SK-N-SH (cell line): ENCODE measurements at regions of chr10 and their contacts with region 1.

Region 1: DNA sequence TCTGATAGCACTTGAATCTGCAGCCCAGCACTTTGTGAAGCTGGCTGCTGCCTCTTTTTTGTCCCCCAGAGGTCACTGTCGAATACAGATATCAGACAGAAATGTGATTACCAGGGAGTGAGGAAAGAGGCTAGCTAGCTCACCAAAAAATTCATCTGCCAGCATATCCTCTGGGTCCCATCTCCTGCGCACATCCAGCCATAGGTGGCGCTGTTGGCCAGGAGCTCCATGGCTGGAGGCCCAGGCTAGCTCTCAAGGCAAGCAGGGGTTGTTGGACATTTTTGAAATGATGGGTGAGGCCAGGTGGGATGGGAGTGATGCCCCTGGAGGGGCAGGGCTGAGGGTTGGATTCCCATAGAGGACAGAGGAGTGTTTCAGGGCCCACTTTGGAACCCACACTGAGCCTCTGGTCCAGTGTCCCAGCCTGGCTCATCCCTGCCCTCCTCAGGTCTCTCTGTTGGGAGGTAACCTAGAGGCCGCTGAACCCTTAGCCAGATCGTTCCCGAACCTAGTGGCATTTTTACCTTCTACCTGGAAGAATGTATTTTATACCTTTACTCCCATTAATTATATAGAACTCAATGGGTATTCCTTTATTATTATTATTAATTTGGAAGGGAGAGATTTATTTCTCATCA is 14.8 kb downstream of the DPCD start:
- DNase-seq: peak; percentile 84
- H3K4me3 ChIP-seq: peak overlapping the region in 1 of 2 experiments; percentile 24; a peak in 1 of 4 replicates
- H3K27ac ChIP-seq: no peak overlapping the region; a peak in 1 of 4 replicates
- H3K4me1 ChIP-seq: no peaks in the 10 kb centered on the region; a peak in 1 of 4 replicates
- H3K27me3 ChIP-seq: no peaks in the 10 kb centered on the region
- CTCF ChIP-seq: peak; percentile 90
- EP300 ChIP-seq: no peak
- RAD21 ChIP-seq: peak; percentile 92

Region 2: DNA sequence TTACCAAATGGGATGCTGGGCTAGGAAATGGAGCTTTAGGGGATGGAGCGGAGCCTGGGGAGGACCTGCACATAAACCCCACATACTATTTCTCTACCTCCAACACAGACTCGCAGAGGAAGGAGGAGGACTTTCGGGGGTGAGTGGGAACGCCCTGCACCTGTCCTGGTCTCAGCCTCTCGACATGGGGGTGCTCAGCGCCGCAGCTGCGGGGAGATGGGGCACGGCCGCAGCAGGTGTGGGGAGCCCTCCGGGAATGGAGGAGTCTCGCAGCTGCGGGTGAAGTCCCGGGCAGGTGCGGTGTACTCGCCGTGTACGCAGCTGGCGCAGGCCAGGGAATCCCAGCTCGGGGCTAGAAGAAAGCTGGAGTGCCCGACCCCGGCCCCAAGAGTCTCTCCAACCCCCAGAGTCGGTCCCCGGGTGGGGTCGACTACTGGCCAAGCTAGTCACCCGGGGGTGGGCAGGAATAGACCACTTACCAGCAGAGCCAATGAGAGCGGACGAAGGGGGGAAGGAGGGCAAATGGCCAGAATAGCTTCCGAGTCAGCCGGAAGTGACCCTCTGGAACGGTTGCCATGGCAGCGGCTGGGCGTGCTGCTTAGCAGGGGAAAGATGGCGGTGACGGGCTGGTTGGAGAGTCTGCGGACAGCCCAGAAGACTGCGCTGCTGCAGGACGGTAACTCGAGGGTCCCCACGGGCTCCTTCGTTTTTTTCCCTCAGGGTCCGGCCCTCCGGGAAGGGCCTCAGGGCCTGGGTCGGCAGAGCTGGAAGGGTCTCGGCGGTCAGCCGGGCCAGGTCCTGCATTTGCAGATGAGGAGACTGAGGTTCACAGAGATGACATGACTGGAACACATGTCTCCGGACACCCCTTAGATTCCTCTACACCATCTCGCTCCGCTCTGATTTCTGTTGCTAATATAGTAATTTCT is 14.9 kb before region 1 on chr10 and contains the starts of genes DPCD and POLL:
- CTCF ChIA-PET with region 1: interaction called, 14 read pairs
- POLR2A ChIA-PET with region 1: interaction called, 3 read pairs
- DNase-seq: peak; percentile 97
- H3K4me3 ChIP-seq: peak within 1 kb of the TSS; percentile 92 to 94
- H3K27ac ChIP-seq: peak within 1 kb of the TSS; percentile 17 to 76; a peak in 2 of 4 replicates
- H3K4me1 ChIP-seq: peaks cover 13 to 26% of the 10 kb centered on the region in 2 experiments; a peak in 2 of 4 replicates
- H3K27me3 ChIP-seq: no peaks in the 10 kb centered on the region
- CTCF ChIP-seq: no peak
- EP300 ChIP-seq: no peak
- RAD21 ChIP-seq: no peak
- polyA plus RNA-seq, gene DPCD: 106 and 121 TPM in 2 replicates
- polyA plus RNA-seq, gene POLL: 22.0 and 27.3 TPM in 2 replicates

Region 3: GRCh38 chr10:101629837-101630632 is 27.2 kb after region 1 on chr10:
- CTCF ChIA-PET with region 1: interaction called, 11 read pairs
- POLR2A ChIA-PET with region 1: no interaction called
- DNase-seq: no peak
- H3K4me3 ChIP-seq: no peak overlapping the region
- H3K27ac ChIP-seq: no peak overlapping the region
- H3K4me1 ChIP-seq: peaks cover 0 to 6% of the 10 kb centered on the region in 2 experiments; a peak in 1 of 4 replicates
- H3K27me3 ChIP-seq: no peaks in the 10 kb centered on the region
- CTCF ChIP-seq: no peak
- EP300 ChIP-seq: no peak
- RAD21 ChIP-seq: no peak

Region 4: DNA sequence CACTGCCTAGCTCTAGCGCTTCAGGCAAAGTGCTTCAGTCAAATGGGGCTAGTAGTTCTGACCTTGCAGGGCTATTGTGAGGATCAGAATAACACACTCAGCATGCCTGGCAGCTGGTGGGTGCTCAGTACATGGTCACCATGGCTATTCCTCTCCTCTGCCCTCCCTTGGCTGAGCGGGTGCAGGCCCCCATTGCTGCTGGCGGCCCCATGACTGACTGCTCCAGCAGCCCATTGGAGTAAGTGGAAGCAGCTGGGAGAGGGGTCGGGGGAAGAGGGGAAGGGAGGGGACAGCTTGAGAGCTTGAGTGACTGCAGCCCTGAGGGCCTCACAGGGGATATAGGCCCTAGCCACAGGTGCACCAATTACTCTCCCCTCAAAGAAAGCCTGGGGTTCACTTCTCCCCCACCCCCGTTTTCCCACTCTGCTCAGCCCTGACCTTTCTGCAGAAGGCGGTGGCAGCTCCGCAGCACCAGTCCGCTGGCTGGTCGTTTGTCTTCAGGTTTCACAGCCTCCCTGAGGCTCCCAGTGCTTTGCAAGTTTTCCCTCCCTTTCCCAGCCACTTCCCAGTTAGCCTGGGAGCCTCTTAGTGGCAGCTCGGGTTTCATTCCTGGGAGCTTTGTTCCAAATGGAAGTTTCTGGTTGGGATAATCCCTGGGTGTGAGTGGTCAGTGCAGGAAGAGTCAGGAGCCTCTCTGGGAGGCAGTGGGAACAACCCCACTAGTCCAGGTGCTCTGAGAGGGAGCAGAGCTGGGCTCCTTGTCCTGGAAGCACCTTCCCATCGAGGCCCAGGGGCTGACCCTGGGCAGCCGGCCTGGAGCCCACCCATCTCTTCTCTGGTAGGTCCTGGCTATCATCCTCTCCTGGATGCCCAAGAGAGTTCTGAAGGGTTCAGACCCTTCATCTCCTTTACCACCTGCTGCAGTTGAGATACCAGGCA is 156.7 kb after region 1 on chr10:
- CTCF ChIA-PET with region 1: interaction called, 11 read pairs
- POLR2A ChIA-PET with region 1: no interaction called
- DNase-seq: peak; percentile 35
- H3K4me3 ChIP-seq: no peak overlapping the region
- H3K27ac ChIP-seq: no peak overlapping the region
- H3K4me1 ChIP-seq: no peaks in the 10 kb centered on the region; a peak in 1 of 4 replicates
- H3K27me3 ChIP-seq: peaks cover 2% of the 10 kb centered on the region; the same call in 1 of the 2 replicates
- CTCF ChIP-seq: no peak
- EP300 ChIP-seq: no peak
- RAD21 ChIP-seq: no peak

Region 5: DNA sequence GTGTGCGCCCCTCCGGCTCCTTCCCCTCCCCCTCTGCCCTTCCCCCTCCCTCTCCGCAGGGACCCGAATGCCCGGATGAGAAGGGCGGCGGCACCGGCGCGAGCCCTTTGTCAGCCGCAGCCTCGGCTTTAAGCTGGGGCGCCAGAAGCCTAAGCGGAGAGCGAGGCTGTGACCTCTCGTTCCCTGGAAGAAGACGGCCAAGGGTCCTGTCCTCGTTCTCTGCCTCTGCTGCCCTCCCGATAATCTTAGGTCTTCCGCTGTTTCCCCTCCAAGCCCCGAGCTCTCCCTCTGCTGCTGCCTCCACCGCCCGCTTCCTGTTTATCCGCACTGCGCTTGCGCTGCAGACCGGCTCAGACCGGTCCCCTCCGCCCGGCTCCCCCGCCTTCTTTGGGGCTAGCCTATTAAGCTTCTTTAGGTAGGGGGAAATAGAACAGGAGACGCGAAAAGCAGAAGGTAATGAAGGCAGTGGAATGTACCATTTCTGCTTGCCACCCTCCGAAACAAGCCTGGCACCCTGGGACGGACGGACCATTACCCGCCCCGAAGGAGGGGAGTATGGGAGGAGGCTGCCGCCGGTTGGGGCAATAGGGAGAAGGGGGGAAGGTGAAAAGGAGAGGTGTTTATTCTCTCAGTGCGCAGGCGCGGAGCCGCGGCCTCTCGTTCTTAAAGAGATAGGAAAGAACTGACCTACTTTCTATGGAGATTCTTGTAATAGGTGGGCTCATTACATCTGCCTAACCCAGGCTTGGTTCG is 215.4 kb after region 1 on chr10 and contains the start of gene OGA:
- CTCF ChIA-PET with region 1: interaction called, 14 read pairs
- POLR2A ChIA-PET with region 1: no interaction called
- DNase-seq: peak; percentile 96
- H3K4me3 ChIP-seq: peak within 1 kb of the TSS; percentile 88 to 96
- H3K27ac ChIP-seq: peak within 1 kb of the TSS; percentile 81 to 97
- H3K4me1 ChIP-seq: peaks cover 6 to 21% of the 10 kb centered on the region in 2 experiments; a peak in 3 of 4 replicates
- H3K27me3 ChIP-seq: no peaks in the 10 kb centered on the region
- CTCF ChIP-seq: no peak
- EP300 ChIP-seq: peak in 1 of 2 experiments; percentile 53; a peak in 1 of 4 replicates
- RAD21 ChIP-seq: no peak
- polyA plus RNA-seq, gene OGA: 24.8 and 36.6 TPM in 2 replicates